OCI-LY7 (cell line): ENCODE measurements at regions of chr10 and their contacts with region 1.

Region 1: GRCh38 chr10:6348096-6348874 is 145.6 kb downstream of the PFKFB3 start:
- DNase-seq: peak; percentile 98
- H3K4me3 ChIP-seq: peak overlapping the region; percentile 65
- H3K27ac ChIP-seq: peak overlapping the region; percentile 97
- H3K4me1 ChIP-seq: peaks cover 77% of the 10 kb centered on the region
- CTCF ChIP-seq: no peak

Region 2: DNA sequence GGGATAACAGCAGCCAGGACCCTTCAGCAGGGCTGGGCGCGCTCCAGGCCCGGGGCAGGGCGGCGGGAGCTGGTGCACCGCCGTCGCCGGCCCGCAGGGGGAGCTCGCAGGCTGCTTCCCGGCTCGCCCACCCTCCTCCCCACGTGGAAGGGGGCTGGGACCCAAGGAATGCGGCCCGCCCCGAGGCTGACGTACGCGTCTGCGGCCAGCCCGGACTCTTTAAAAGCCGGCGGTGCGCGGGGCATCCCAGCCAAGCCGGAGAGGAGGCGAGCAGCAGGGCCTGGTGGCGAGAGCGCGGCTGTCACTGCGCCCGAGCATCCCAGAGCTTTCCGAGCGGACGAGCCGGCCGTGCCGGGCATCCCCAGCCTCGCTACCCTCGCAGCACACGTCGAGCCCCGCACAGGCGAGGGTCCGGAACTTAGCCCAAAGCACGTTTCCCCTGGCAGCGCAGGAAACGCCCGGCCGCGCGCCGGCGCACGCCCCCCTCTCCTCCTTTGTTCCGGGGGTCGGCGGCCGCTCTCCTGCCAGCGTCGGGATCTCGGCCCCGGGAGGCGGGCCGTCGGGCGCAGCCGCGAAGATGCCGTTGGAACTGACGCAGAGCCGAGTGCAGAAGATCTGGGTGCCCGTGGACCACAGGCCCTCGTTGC is 145.5 kb before region 1 on chr10 and contains the start of gene PFKFB3:
- CTCF ChIA-PET with region 1: interaction called, 7 read pairs
- POLR2A ChIA-PET with region 1: interaction called, 13 read pairs
- intact Hi-C with region 1: loop called (anchors 1 kb)
- DNase-seq: peak; percentile 97
- H3K4me3 ChIP-seq: peak within 1 kb of the TSS; percentile 99
- H3K27ac ChIP-seq: peak within 1 kb of the TSS; percentile 63
- H3K4me1 ChIP-seq: peaks cover 53% of the 10 kb centered on the region
- CTCF ChIP-seq: peak; percentile 84
- total RNA-seq, gene PFKFB3: 29.0 and 33.7 TPM in 2 replicates

Region 3: DNA sequence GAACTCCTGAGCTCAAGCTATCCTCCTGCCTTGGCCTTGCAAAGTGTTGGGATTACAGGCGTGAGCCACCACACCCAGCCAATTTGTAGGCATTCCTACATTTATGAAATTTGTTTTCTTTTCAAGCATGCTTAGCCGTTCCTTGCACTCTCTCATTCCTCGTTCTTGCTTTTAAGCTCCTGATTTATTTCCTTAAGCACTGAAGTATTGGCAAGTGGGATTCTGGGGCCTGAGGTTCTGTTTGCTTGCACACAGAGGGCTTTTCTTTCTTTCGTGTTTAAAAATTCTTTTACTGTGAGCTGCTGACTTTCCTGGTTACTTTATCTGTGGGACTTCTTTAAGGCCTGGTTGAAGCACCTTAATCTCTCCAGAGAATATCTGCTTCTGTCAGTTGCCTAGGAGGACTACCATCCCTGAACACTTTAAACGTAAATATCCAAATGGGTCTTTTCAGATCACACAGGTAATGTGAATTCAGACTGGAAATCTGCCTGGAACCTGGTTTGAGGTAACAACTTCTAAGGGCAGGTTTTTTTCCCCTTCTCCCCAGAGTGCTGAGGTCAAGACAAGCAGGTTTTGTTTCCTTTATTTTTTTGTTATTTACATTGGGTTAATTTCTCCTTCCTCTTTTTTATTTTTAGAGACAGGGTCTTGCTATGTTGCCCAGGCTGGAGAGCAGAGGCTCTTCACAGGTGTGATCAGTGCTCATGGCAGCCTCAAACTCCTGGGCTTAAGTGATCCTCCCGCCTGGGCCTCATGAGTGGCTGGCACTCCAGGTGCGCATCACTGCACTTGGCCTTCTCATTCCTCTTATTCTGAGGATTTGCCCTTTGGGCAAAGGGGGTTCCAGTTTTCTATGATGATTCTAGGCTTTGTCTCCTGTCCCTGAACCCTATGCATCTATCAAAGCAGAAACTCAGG is 42.6 kb before region 1 on chr10:
- CTCF ChIA-PET with region 1: interaction called, 4 read pairs
- POLR2A ChIA-PET with region 1: interaction called, 46 read pairs
- intact Hi-C with region 1: loop called (anchors 1 kb)
- DNase-seq: peak; percentile 48
- H3K4me3 ChIP-seq: no peak overlapping the region
- H3K27ac ChIP-seq: peak overlapping the region; percentile 33
- H3K4me1 ChIP-seq: peaks cover 52% of the 10 kb centered on the region
- CTCF ChIP-seq: no peak

Region 4: DNA sequence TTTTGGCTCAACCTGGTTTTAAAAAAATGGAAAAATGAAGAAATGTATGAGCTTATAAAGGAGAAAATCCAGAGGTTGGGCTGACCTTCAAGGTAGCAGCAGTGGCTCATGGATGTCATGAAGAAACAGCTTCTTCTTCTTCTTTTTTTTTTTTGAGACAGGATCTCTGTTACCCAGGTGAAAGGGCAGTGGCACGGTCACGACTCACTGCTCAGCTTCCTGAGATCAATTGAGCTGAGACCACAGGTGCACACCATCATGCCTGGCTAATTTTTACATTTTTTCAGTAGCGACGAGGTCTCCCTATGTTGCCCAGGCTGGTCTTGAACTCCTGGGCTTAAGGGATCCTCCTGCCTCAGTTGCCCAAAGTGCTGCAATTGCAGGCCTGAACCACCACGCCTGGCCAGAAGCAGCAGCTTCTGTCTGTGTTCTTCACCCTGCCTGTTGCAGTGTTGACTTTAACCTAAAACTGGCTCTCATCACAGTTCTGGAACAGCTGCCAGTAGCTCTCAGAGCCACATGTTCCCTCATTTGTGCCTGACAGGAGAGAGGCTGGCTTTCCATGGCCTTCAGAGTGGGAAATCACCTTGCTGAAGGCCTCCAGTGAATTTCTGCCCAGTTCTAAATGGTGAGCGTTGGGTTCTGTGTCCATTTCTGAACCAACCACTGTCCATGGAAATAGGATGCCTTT is 27.8 kb before region 1 on chr10:
- CTCF ChIA-PET with region 1: interaction called, 4 read pairs
- POLR2A ChIA-PET with region 1: interaction called, 83 read pairs
- intact Hi-C with region 1: loop called (anchors 1 kb)
- DNase-seq: peak; percentile 96
- H3K4me3 ChIP-seq: peak overlapping the region; percentile 24
- H3K27ac ChIP-seq: peak overlapping the region; percentile 97
- H3K4me1 ChIP-seq: peaks cover 79% of the 10 kb centered on the region
- CTCF ChIP-seq: no peak

Region 5: GRCh38 chr10:6337382-6337781 is 10.9 kb before region 1 on chr10:
- CTCF ChIA-PET with region 1: no interaction called
- POLR2A ChIA-PET with region 1: interaction called, 31 read pairs
- intact Hi-C with region 1: no loop called
- DNase-seq: no peak
- H3K4me3 ChIP-seq: no peak overlapping the region
- H3K27ac ChIP-seq: no peak overlapping the region
- H3K4me1 ChIP-seq: peaks cover 5% of the 10 kb centered on the region
- CTCF ChIP-seq: no peak

Region 6: DNA sequence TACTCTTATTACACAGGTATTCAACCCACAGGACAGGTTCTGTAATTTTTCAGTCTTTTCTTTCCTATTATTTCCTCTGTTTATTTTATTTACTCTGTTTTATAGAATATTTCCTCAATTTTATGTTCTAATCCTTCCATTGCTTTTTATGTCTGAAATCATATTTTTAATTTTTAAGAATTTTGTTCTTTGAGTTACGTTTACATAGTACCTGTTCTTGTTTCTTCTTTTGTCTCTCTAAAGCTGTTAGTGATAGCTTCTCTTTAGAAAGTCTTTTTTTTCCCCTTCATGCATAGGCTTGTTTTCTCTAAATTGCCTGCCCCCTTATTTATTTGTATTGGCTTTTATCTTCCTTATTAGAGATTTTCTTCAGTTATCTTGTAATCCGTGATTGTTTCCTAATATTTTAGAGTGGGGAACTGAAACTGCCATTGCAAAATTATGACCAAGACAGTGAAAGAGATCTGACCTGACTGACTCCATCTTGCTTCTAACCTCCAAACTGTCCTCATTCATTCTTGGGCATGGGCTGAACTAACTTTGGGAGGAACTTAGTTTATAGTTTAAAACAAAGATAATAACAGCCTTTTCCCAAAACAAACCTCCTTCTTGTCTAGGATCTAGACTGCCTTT is 42.0 kb after region 1 on chr10:
- CTCF ChIA-PET with region 1: no interaction called
- POLR2A ChIA-PET with region 1: interaction called, 12 read pairs
- intact Hi-C with region 1: no loop called
- DNase-seq: no peak
- H3K4me3 ChIP-seq: no peak overlapping the region
- H3K27ac ChIP-seq: no peak overlapping the region
- H3K4me1 ChIP-seq: no peaks in the 10 kb centered on the region
- CTCF ChIP-seq: no peak